ENCODE measurements at regions of chr22 and their contacts with region 1.

Region 1: DNA sequence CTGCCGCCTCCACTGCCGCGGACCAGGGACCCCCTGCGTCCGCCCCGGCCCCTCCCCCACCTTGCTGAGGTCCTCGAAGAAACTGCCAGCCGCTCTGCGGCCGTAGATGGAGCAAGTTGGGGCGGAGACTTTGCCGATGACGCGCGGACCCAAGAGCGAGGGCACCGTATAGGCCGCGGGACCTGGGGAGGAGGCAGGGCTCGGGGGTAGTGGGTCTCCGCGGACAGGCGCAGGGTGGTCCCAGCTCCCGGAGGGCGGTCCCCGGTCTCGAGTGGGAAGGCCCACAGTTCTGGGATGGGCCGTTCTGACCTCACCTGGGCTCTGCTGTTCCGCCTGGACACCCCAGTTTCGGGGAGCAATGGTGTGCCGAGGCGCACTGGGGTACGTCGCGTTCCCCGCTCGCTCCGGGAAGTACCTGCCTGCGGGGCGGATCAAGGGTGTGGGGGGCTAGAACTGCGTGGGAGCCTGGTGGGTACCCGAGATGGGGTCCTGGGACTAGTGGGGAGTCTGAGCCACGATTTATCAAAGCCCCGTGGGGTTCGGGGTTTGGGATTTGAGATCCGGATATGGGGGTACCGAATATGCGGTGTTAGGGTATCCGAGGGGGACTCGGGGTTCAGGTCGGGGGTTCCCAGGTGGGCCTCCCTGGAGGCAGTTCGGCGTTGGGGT is 1.2 kb upstream of the TYMP start:
- DNase-seq: peak; percentile 47
- ATAC-seq: peak; percentile 32
- H3K4me3 ChIP-seq: peak overlapping the region; percentile 58 to 83 (median 74)
- H3K27ac ChIP-seq: peak overlapping the region; percentile 74
- H3K4me1 ChIP-seq: peaks cover 74% of the 10 kb centered on the region
- H3K27me3 ChIP-seq: 0 out of 5 replicates have a peak, but pooled peaks cover 0 to 6% of the 10 kb centered on the region in 2 experiments
- CTCF ChIP-seq: no peak
- EP300 ChIP-seq: no peak
- POLR2A ChIP-seq: peak in 1 of 2 experiments; percentile 20; a peak in 1 of 4 replicates
- RAD21 ChIP-seq: no peak

Region 2: DNA sequence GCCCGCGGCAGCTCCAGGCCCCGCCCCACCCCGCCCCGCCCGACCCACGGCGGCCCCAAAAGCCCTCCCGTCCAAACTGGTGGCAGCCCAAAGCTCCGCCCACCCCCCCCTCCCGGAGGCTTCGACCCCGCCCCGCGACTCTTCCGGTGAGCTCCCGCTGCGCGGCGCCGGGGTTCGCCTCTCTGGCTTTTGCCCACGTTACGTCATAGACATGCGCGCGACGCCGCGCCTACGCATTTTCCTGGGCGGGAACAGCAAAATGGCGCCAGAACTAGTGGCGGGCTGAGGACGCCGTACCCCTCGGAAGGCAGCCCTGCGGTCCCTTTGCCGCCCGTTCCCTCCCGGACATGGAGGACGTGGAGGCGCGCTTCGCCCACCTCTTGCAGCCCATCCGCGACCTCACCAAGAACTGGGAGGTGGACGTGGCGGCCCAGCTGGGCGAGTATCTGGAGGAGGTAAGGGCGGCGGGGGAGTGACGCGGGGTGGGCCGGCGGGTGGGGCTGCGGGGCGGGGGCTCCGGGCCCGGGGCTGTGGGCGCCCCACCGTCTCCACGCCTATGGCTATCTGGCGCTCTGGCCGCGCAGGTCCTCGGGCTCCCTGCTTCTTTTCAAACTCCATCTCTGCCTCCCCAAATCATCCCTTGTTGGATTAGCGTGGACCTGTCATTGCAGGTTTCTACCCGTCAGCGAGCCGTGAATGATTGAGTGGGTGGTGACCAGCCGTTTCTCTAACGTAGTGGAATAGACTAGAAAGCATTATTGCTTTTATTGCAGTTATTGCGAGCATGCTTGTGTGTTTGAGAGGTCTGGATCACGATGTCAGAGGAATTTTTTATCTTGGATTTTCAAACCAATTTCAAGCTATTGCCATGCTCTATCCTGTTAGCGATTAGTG is 22.8 kb before region 1 on chr22 and contains the start of gene NCAPH2:
- CTCF ChIA-PET with region 1: no interaction called
- POLR2A ChIA-PET with region 1: interaction called, 97 read pairs
- in situ Hi-C with region 1: no loop called
- intact Hi-C with region 1: no loop called
- DNase-seq: peak; percentile 89
- ATAC-seq: peak; percentile 42
- H3K4me3 ChIP-seq: peak within 1 kb of the TSS; percentile 90 to 99 (median 93)
- H3K27ac ChIP-seq: peak within 1 kb of the TSS; percentile 87
- H3K4me1 ChIP-seq: peaks cover 19% of the 10 kb centered on the region
- H3K27me3 ChIP-seq: no peaks in the 10 kb centered on the region; a peak in 1 of 5 replicates
- CTCF ChIP-seq: peak; percentile 50
- EP300 ChIP-seq: peak; percentile 42 to 53; a peak in 1 of 4 replicates
- POLR2A ChIP-seq: peak; percentile 81 to 87
- RAD21 ChIP-seq: no peak
- total RNA-seq, gene NCAPH2: 44.1 and 64.4 TPM in 2 replicates

Region 3: DNA sequence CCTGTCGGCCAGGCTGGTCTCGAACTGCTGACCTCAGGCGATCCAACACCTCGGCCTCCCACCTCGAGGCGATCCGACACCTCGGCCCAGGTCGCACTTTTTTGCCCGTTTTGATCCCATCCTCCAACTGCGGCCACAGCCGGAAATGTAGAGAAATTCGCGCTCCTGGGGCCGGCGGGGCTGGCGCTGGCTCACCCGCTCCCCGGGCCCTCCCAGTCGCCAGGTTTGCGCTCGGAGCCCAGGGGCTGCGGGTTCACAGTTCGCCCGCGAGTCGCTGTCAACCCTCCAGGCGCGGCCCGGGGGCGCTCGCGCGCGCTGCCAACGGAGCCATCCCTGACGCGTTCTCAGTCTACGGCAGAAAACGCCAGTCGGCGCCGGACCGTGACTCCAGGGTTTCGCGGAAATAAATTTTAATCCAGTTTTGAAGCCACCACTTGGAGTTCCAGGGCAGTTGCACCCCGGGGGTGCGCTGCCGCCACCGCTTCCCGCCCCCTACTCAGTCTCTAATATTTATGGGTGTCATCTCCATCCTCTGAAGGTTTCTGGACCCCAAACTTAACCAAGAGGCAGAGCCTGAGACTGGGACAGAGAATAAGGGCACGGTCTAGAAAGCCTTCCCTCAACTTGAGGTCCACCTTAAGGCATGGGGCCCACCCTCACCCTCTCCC is 13.2 kb after region 1 on chr22:
- CTCF ChIA-PET with region 1: no interaction called
- POLR2A ChIA-PET with region 1: interaction called, 34 read pairs
- in situ Hi-C with region 1: no loop called
- intact Hi-C with region 1: no loop called
- DNase-seq: no peak
- ATAC-seq: no peak
- H3K4me3 ChIP-seq: no peak overlapping the region
- H3K27ac ChIP-seq: no peak overlapping the region
- H3K4me1 ChIP-seq: peaks cover 35% of the 10 kb centered on the region
- H3K27me3 ChIP-seq: peaks cover 3 to 30% of the 10 kb centered on the region in 2 experiments
- CTCF ChIP-seq: no peak
- EP300 ChIP-seq: no peak
- POLR2A ChIP-seq: no peak
- RAD21 ChIP-seq: no peak

Region 4: DNA sequence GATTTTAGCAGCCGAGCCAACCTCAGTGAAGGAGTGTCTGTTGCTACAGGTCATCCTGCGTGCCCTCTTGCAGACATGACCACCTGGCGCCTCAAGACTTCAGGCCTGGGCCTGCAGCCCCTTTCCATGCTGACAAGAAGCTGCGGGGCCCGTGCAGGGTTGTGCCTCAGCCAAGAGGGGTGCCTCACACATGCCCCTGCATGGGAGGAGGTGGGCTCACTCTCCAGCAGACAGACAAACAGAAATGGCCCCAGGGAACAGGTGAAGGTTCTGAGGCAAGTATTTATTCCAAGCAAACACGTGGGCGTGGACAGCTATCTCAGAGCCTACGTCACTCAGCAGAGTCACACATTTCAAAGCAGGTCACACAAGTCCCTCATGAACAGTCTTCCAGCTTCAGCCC is 37.6 kb after region 1 on chr22:
- CTCF ChIA-PET with region 1: no interaction called
- POLR2A ChIA-PET with region 1: interaction called, 36 read pairs
- in situ Hi-C with region 1: loop called (anchors 5 kb)
- intact Hi-C with region 1: loop called (anchors 5 kb)
- DNase-seq: peak; percentile 83
- ATAC-seq: peak; percentile 71
- H3K4me3 ChIP-seq: peak overlapping the region in 1 of 3 experiments; percentile 7; a peak in 1 of 6 replicates
- H3K27ac ChIP-seq: peak overlapping the region; percentile 83
- H3K4me1 ChIP-seq: peaks cover 39% of the 10 kb centered on the region
- H3K27me3 ChIP-seq: no peaks in the 10 kb centered on the region
- CTCF ChIP-seq: no peak
- EP300 ChIP-seq: peak in 1 of 2 experiments; percentile 29; a peak in 1 of 4 replicates
- POLR2A ChIP-seq: peak in 1 of 2 experiments; percentile 43; a peak in 1 of 4 replicates
- RAD21 ChIP-seq: no peak